ENCODE measurements at regions of chr5 and their contacts with region 1.

Region 1: DNA sequence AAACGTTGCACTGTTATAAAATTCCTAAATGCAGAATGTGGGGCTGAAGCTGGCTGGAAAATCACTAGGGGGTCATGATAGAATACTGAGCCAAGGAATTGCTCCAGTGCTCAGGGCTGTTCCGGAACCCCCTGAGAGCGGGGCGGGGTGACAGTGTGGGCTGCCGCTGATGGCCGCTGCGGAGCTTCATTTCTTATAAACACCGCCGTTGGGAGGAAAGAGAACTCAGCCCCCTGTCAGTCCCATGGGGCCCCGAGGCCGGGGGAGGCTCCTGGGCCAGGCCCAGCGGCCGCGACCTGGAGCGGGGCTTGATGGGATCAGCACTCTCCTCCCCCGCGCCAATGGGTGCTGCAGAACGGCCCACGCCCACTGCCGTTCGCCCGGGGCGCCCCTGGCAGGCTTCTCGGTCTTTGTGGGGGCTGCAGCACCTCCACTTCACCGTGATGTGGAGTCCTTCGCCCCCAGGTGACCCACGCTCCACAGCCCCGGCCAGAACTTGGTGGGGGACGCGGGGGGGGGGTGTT is 5.2 kb upstream of the IRF1 start:
- H3K4me3 ChIP-seq: peak overlapping the region; percentile 54
- H3K27ac ChIP-seq: peak overlapping the region; percentile 66; the same call in 1 of the 2 replicates
- H3K4me1 ChIP-seq: peaks cover 6% of the 10 kb centered on the region
- CTCF ChIP-seq: peak; percentile 36; the same call in 1 of the 2 replicates

Region 2: DNA sequence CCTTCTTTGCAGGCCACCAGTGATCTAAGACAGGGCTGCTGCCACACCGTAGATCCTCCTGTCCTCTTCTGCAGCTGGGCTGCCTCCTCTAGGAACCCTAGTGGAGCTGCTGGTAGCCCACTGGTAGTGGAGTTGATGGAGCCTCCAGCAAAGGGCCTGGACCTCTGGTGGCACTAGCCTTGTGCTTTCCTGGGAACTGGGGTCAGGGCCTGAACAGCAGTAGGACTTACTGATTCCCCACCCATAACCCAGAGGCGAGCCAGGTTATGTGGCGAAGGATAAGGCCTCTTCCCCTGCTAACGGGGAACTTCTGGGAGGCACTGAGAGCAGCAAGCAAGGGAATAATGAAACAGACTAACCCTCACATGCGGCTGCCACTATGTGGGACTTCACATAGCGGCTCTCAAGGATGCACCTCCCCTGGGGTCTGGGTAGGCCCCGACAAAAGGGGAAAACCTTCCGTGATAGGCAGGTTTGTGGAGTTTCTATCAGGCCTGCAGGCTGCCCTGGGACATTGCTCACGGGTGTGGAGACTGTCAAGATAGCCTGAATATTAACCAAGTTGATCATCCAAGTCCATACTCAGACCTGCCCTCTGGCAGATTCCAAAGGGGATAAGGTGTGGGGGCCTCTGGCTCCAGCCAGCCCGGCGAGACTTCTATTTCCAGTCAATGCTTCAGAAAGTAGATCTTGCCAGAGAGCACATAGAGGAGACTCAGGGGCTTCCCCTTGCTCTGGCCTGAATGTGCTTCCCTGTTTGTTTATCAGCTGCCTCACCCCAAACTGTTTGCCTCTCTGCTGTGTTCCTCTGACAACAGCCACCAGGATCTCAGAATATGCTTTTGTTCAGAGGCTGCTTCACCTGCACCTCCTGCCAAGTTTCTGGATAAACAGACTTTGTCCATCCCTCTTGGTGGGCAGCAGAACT is 194.1 kb before region 1 on chr5:
- CTCF ChIA-PET with region 1: no interaction called
- POLR2A ChIA-PET with region 1: no interaction called
- H3K4me3 ChIP-seq: no peak overlapping the region
- H3K27ac ChIP-seq: no peak overlapping the region
- H3K4me1 ChIP-seq: no peaks in the 10 kb centered on the region
- CTCF ChIP-seq: no peak

Region 3: GRCh38 chr5:132369474-132370180 is 126.1 kb before region 1 on chr5 and contains the start of gene SLC22A5:
- CTCF ChIA-PET with region 1: interaction called, 3 read pairs
- POLR2A ChIA-PET with region 1: interaction called, 13 read pairs
- H3K4me3 ChIP-seq: peak within 1 kb of the TSS; percentile 78
- H3K27ac ChIP-seq: peak within 1 kb of the TSS; percentile 65
- H3K4me1 ChIP-seq: no peaks in the 10 kb centered on the region
- CTCF ChIP-seq: no peak

Region 4: DNA sequence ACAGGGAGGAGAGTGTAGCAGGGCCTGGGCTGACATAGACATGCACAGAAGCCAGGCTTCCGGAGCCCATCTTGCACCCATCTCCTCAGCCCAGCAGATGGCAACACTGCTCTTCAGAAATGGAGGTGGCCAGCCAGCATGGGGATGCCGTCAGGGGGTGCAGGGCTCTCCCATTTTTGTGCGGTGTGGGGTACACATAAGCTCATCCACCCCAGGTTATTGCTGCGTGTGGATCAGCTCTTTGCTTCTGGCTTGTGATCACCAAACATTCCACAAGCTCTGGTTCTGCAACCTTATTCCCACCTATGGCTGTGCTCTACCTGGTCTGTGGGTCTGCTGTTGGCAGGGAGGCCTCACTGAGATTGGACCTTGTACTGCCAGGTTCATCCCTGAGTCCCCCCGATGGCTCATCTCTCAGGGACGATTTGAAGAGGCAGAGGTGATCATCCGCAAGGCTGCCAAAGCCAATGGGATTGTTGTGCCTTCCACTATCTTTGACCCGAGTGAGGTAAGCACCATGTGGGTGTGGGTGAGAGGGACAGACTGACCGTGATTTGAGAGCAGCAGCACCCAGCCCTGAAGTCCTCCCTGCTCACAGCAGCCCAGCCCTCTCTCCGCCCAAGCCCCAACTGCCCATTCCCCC is 109.0 kb before region 1 on chr5:
- CTCF ChIA-PET with region 1: interaction called, 140 read pairs
- POLR2A ChIA-PET with region 1: interaction called, 8 read pairs
- H3K4me3 ChIP-seq: no peak overlapping the region
- H3K27ac ChIP-seq: no peak overlapping the region
- H3K4me1 ChIP-seq: no peaks in the 10 kb centered on the region
- CTCF ChIP-seq: peak; percentile 67; the same call in 1 of the 2 replicates

Region 5: DNA sequence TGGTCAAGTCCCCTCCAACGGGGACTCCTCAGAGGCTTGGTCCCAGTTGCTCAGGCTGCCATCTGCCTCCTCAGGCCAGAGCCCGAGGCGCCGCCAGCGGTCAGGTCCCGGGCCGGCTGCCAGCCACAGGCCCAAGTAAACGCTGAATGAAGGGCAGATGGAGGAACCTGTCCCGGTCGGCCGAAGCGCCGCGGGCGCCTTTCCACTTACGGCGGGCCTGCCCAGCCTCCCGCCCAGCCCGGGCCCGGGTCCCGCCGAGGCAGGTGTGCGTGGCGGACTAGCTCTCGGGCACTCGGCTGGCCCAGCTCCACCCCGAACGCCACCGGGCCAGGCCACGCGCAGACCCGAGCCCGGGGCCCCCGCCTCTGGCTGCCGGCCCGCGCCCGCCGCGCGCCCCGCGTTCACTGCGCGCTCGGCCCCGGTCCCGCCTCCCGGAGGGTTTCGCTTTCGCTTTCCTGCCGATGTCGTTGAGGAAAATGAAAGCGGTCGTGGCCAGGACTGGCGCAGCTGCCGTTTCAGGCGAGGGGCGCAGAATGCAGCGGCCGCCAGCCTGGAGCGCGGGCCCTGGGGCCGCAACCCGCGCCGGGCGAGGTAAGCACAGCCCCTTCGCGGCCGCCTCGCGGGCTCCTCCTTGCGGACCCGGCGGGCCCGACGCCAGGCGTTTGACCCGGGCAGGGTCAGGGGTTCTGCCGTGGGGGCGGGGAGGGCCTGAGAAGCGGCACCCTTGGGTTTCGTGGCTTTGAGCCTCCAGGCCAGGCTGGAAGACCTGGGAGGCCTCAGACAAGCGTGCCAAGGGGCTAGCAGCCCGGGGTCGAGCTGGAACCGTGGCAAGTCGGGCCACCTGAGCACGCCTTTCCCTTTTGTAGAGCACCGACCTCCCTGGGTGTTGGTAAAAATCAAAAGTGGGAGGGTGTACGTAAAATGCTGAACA is 85.0 kb before region 1 on chr5:
- CTCF ChIA-PET with region 1: interaction called, 18 read pairs
- POLR2A ChIA-PET with region 1: interaction called, 11 read pairs
- H3K4me3 ChIP-seq: peak overlapping the region; percentile 54
- H3K27ac ChIP-seq: peak overlapping the region; percentile 93
- H3K4me1 ChIP-seq: peaks cover 4% of the 10 kb centered on the region; the same call in 1 of the 2 replicates
- CTCF ChIP-seq: peak; percentile 55; the same call in 1 of the 2 replicates

Region 6: GRCh38 chr5:132419502-132420468 is 75.9 kb before region 1 on chr5:
- CTCF ChIA-PET with region 1: interaction called, 18 read pairs
- POLR2A ChIA-PET with region 1: interaction called, 27 read pairs
- H3K4me3 ChIP-seq: no peak overlapping the region
- H3K27ac ChIP-seq: no peak overlapping the region
- H3K4me1 ChIP-seq: peaks cover under 1% of the 10 kb centered on the region; the same call in 1 of the 2 replicates
- CTCF ChIP-seq: peak; percentile 87

Region 7: DNA sequence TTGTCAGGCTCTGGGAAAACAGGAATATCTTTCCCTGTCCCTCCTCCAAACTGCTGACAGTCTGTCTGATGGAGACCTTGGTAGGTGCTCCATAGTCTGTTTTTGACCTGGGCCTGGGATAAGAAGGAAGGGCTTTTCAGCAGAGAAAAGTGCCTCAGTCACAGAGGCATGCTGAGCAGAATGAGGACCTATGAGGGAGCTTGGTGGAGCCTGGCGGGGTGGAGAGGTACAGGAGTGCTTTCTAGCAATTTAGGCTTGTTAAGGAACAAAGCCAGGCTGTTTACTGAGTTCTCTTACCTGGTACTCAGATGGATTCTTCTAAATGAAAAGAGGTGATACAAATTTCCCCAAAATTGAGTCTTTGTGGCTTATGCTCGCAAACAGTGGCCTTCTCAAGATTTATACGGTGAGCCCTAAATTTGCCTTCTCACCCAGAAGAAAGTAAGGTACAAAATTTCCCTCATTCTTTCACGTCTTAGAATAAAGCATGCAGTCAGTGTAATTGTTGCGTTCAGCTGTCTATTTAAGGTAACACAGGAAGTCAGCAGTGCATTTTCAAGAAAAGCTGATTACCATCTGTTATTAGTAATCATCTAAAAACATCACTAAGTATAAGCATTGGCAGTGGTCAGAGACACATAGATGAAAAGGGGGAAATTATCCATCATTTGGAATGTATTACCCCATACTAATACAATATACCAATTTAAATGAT is 133.7 kb after region 1 on chr5:
- CTCF ChIA-PET with region 1: no interaction called
- POLR2A ChIA-PET with region 1: no interaction called
- H3K4me3 ChIP-seq: no peak overlapping the region
- H3K27ac ChIP-seq: no peak overlapping the region
- H3K4me1 ChIP-seq: no peaks in the 10 kb centered on the region
- CTCF ChIP-seq: no peak

Measured in HEK293 (cell line).